Naive thymus-derived CD4-positive, alpha-beta T cell (primary cell): ENCODE measurements at regions of chr12 and their contacts with region 1.

Region 1: DNA sequence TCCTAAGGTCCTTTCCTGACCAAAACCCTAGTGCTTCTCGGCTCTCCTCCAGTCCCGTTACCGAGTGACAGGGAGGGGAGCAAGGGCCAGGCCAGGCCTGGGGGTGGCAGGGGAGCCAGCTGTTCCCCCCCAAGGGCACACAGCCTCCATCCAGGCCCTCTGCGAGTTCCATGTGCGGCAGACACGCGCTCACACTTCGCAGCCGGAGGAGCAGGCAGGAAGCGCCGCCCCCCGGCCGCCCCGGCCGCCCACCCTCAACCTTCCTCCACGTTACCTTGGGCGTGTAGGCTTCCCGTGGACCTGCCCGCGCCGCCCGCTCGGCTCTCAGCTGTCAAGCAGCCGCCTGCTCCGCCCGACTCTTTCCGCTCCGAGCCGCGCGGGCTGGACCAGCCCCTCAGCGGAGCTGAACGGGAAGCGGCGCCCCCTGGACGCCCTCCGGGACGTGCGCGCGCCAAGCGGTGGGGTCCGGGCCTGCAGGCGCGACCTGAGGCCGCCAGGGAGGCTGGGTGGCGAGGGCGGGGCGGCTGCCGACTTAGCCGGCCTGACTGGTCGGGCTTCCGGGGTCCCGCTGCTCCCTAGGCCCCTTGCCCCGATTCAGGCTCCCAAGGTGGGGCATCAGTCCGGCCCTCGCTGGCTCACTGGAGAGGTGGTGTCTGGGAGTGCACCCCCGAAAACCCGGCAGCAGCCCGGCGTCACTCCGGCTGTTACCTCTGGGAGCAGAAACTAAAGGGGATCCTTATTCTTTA is at the start of gene CRACR2A:
- DNase-seq: peak; percentile 75 to 85 (median 83)
- ATAC-seq: peak; percentile 90
- H3K4me3 ChIP-seq: peak within 1 kb of the TSS; percentile 77
- H3K4me3 Mint-ChIP-seq: peak within 1 kb of the TSS; percentile 89 to 100 (median 94)
- H3K27ac ChIP-seq: peak within 1 kb of the TSS; percentile 93
- H3K27ac Mint-ChIP-seq: peak within 1 kb of the TSS; percentile 93 to 100 (median 97)
- H3K4me1 ChIP-seq: peaks cover 25 to 34% of the 10 kb centered on the region in 2 donors
- H3K4me1 Mint-ChIP-seq: peaks cover 46 to 70% (median 58%) of the 10 kb centered on the region in 7 donors
- H3K27me3 ChIP-seq: no peaks in the 10 kb centered on the region
- H3K27me3 Mint-ChIP-seq: no peaks in the 10 kb centered on the region
- total RNA-seq, gene CRACR2A: 31.4 to 40.3 (median 39.4) TPM

Region 2: GRCh38 chr12:2877047-2877952 is 875.6 kb before region 1 on chr12 and contains the starts of genes FOXM1 and RHNO1:
- CTCF ChIA-PET with region 1: no interaction called
- POLR2A ChIA-PET with region 1: no interaction called
- intact Hi-C with region 1: loop called in 1 of 2 experiments (anchors 5 kb)
- DNase-seq: peak; percentile 79 to 92 (median 88)
- ATAC-seq: peak; percentile 87
- H3K4me3 ChIP-seq: peak within 1 kb of the TSS; percentile 83
- H3K4me3 Mint-ChIP-seq: peak within 1 kb of the TSS; percentile 89 to 100 (median 98)
- H3K27ac ChIP-seq: peak within 1 kb of the TSS; percentile 94
- H3K27ac Mint-ChIP-seq: peak within 1 kb of the TSS; percentile 98 to 100 (median 99)
- H3K4me1 ChIP-seq: peaks cover 10 to 14% of the 10 kb centered on the region in 2 donors
- H3K4me1 Mint-ChIP-seq: peaks cover 21 to 54% (median 45%) of the 10 kb centered on the region in 7 donors
- H3K27me3 ChIP-seq: no peaks in the 10 kb centered on the region
- H3K27me3 Mint-ChIP-seq: no peaks in the 10 kb centered on the region
- total RNA-seq, gene FOXM1: 0.35 to 77.2 (median 0.82) TPM in 4 of 5 experiments, not detected in the other
- total RNA-seq, gene RHNO1: 13.7 to 44.3 (median 28.7) TPM

Region 3: GRCh38 chr12:3677609-3678008 is 75.3 kb before region 1 on chr12:
- CTCF ChIA-PET with region 1: no interaction called
- POLR2A ChIA-PET with region 1: no interaction called
- intact Hi-C with region 1: loop called in 1 of 2 experiments (anchors 5 kb)
- DNase-seq: no peak
- ATAC-seq: no peak
- H3K4me3 ChIP-seq: no peak overlapping the region
- H3K4me3 Mint-ChIP-seq: no peak overlapping the region
- H3K27ac ChIP-seq: no peak overlapping the region
- H3K27ac Mint-ChIP-seq: peak overlapping the region in 2 of 9 donors; percentile 57 to 74
- H3K4me1 ChIP-seq: no peaks in the 10 kb centered on the region
- H3K4me1 Mint-ChIP-seq: peaks cover 0 to 7% (median 0%) of the 10 kb centered on the region in 7 donors
- H3K27me3 ChIP-seq: no peaks in the 10 kb centered on the region
- H3K27me3 Mint-ChIP-seq: no peaks in the 10 kb centered on the region

Region 4: GRCh38 chr12:3809347-3810015 is 56.6 kb after region 1 on chr12:
- CTCF ChIA-PET with region 1: no interaction called
- POLR2A ChIA-PET with region 1: no interaction called
- intact Hi-C with region 1: no loop called
- DNase-seq: no peak
- ATAC-seq: no peak
- H3K4me3 ChIP-seq: no peak overlapping the region
- H3K4me3 Mint-ChIP-seq: no peak overlapping the region
- H3K27ac ChIP-seq: no peak overlapping the region
- H3K27ac Mint-ChIP-seq: peak overlapping the region in 7 of 9 donors; percentile 13 to 70 (median 58)
- H3K4me1 ChIP-seq: no peaks in the 10 kb centered on the region
- H3K4me1 Mint-ChIP-seq: peaks cover 5 to 32% (median 17%) of the 10 kb centered on the region in 7 donors
- H3K27me3 ChIP-seq: no peaks in the 10 kb centered on the region
- H3K27me3 Mint-ChIP-seq: no peaks in the 10 kb centered on the region

Region 5: DNA sequence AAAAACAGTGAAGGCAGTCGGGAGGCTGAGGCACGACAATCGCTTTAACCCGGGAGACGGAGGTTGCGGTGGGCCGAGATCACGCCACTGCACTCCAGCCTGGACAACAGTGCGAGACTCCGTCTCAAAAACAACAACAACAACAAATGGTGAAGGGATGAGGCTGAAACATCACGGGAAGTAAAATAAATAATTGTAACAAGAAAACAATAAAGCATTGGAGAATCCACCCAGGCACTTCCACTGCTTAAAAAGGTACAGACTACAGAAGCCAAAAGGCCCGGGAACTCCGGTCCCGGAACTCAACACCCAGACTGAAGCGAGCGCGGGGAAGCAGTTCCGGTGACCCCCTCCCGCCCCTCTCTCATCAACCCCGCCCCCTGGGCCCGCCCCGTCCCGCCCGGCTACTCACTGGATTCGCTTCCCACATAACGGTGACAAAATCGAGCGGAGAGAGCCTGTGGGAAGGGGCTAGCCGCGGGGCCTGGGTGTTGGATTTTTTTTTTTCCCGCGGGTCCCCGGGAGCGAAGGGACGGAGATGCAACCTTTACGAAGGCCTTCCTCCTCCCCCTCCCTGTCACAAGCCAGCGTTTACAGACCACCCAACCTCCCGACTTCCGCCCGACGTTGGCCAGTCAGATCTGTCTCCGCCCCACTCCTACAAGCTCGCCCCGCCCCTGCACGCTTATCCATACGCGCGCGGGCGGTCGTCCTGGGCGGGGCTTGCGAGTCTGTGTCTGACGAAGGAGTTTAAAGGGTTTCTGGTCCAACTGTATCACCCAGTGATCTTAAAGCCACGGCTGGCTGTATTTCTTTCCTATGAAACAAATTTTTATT is 120.1 kb after region 1 on chr12 and contains the start of gene PARP11:
- CTCF ChIA-PET with region 1: no interaction called
- POLR2A ChIA-PET with region 1: interaction called, 4 read pairs
- intact Hi-C with region 1: loop called (anchors 1 to 2 kb)
- DNase-seq: peak; percentile 93 to 98 (median 96)
- ATAC-seq: peak; percentile 98
- H3K4me3 ChIP-seq: peak within 1 kb of the TSS; percentile 93
- H3K4me3 Mint-ChIP-seq: peak within 1 kb of the TSS; percentile 90 to 99 (median 94)
- H3K27ac ChIP-seq: peak within 1 kb of the TSS; percentile 96
- H3K27ac Mint-ChIP-seq: peak within 1 kb of the TSS; percentile 95 to 99 (median 98)
- H3K4me1 ChIP-seq: peaks cover 23 to 32% of the 10 kb centered on the region in 2 donors
- H3K4me1 Mint-ChIP-seq: peaks cover 31 to 58% (median 55%) of the 10 kb centered on the region in 7 donors
- H3K27me3 ChIP-seq: no peaks in the 10 kb centered on the region
- H3K27me3 Mint-ChIP-seq: peaks cover 0 to 6% (median 0%) of the 10 kb centered on the region in 5 donors
- total RNA-seq, gene PARP11: 21.5 to 37.4 (median 35.1) TPM

Region 6: GRCh38 chr12:4269279-4269991 is 516.5 kb after region 1 on chr12:
- CTCF ChIA-PET with region 1: no interaction called
- POLR2A ChIA-PET with region 1: interaction called, 4 read pairs
- intact Hi-C with region 1: loop called (anchors 2 to 5 kb)
- DNase-seq: peak; percentile 84 to 95 (median 94)
- ATAC-seq: peak; percentile 64
- H3K4me3 ChIP-seq: peak overlapping the region; percentile 85
- H3K4me3 Mint-ChIP-seq: peak overlapping the region; percentile 94 to 100 (median 97)
- H3K27ac ChIP-seq: peak overlapping the region; percentile 97
- H3K27ac Mint-ChIP-seq: peak overlapping the region; percentile 97 to 99 (median 98)
- H3K4me1 ChIP-seq: peaks cover 4 to 11% of the 10 kb centered on the region in 2 donors
- H3K4me1 Mint-ChIP-seq: peaks cover 4 to 29% (median 15%) of the 10 kb centered on the region in 7 donors
- H3K27me3 ChIP-seq: no peaks in the 10 kb centered on the region
- H3K27me3 Mint-ChIP-seq: peaks cover 0 to 35% (median 0%) of the 10 kb centered on the region in 5 donors

Region 7: GRCh38 chr12:4483885-4484823 is 731.2 kb after region 1 on chr12:
- CTCF ChIA-PET with region 1: no interaction called
- POLR2A ChIA-PET with region 1: no interaction called
- intact Hi-C with region 1: no loop called
- DNase-seq: no peak
- ATAC-seq: no peak
- H3K4me3 ChIP-seq: no peak overlapping the region
- H3K4me3 Mint-ChIP-seq: no peak overlapping the region
- H3K27ac ChIP-seq: no peak overlapping the region
- H3K27ac Mint-ChIP-seq: peak overlapping the region in 5 of 9 donors; percentile 0 to 63 (median 18)
- H3K4me1 ChIP-seq: no peaks in the 10 kb centered on the region
- H3K4me1 Mint-ChIP-seq: peaks cover 0 to 9% (median 0%) of the 10 kb centered on the region in 7 donors
- H3K27me3 ChIP-seq: no peaks in the 10 kb centered on the region
- H3K27me3 Mint-ChIP-seq: peaks cover 0 to 6% (median 4%) of the 10 kb centered on the region in 5 donors

Region 8: DNA sequence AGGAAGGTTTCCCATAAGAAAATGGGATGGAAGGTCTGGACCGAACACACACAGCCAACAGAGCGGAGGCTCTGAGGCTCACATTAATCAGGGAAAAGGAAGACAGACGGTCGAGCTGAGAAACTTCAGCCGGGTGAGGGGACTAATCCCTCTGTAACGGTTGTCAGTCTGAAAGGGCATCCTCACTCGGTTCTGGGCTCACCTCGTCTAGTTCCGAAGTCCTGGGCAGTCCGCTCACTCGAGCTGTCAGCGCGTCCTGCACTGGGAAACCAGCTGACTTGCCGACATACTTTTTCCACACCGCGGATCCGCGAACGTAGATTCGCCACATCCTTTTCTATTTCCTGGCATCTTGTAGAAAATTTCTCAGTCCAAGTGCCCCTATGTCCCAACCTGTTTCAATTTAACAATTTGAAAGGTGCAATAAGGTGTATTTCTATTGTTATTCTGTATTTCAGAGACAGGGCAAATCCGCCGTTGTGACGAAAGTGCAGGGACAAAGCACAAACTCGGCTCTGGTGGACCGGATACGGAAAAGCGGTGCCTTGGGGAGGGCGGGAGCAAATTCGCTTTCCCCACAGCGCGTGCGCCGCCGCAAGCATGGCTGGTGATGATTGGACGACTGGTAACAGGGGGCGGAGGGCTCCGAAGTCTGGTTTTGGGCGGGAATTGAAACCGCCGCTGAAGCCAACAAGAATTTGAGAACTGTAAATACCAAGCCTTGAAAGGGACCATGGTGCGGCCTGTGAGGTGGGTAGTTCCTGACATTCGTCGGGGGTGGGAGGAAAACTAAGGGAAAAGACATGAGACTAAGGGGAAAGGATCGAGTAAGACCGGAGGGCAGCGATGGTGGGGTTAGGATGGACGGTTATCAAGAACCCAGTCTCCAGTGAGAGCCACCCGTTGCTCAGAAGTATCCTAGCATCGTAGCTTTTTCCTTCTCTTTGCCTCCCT is 785.6 kb after region 1 on chr12 and contains the start of gene RAD51AP1:
- CTCF ChIA-PET with region 1: no interaction called
- POLR2A ChIA-PET with region 1: no interaction called
- intact Hi-C with region 1: loop called in 1 of 2 experiments (anchors 2 kb)
- DNase-seq: peak; percentile 87 to 98 (median 95)
- ATAC-seq: peak; percentile 100
- H3K4me3 ChIP-seq: peak within 1 kb of the TSS; percentile 90
- H3K4me3 Mint-ChIP-seq: peak within 1 kb of the TSS; percentile 91 to 99 (median 96)
- H3K27ac ChIP-seq: peak within 1 kb of the TSS; percentile 84
- H3K27ac Mint-ChIP-seq: peak within 1 kb of the TSS; percentile 96 to 99 (median 98)
- H3K4me1 ChIP-seq: peaks cover 11 to 13% of the 10 kb centered on the region in 2 donors
- H3K4me1 Mint-ChIP-seq: peaks cover 6 to 40% (median 32%) of the 10 kb centered on the region in 7 donors
- H3K27me3 ChIP-seq: no peaks in the 10 kb centered on the region
- H3K27me3 Mint-ChIP-seq: no peaks in the 10 kb centered on the region
- total RNA-seq, gene RAD51AP1: 0.13 to 37.6 (median 1.7) TPM